Mammary epithelial cell (primary cell): ENCODE measurements at regions of chr6 and their contacts with region 1.

Region 1: GRCh38 chr6:146857180-146857979 is 258.6 kb downstream of the ADGB start:
- DNase-seq: peak; percentile 60
- H3K4me3 ChIP-seq: peak overlapping the region in 1 of 3 experiments; percentile 25
- H3K27ac ChIP-seq: no peak overlapping the region
- H3K4me1 ChIP-seq: peaks cover 8% of the 10 kb centered on the region
- H3K27me3 ChIP-seq: no peaks in the 10 kb centered on the region
- CTCF ChIP-seq: peak; percentile 91 to 96

Region 2: GRCh38 chr6:146803601-146804000 is 53.8 kb before region 1 on chr6:
- CTCF ChIA-PET with region 1: no interaction called
- dilution Hi-C with region 1: no loop called
- in situ Hi-C with region 1: no loop called
- intact Hi-C with region 1: no loop called
- DNase-seq: no peak
- H3K4me3 ChIP-seq: no peak overlapping the region
- H3K27ac ChIP-seq: no peak overlapping the region
- H3K4me1 ChIP-seq: no peaks in the 10 kb centered on the region
- H3K27me3 ChIP-seq: no peaks in the 10 kb centered on the region
- CTCF ChIP-seq: no peak

Region 3: GRCh38 chr6:146913842-146914488 is 56.6 kb after region 1 on chr6:
- CTCF ChIA-PET with region 1: no interaction called
- dilution Hi-C with region 1: no loop called
- in situ Hi-C with region 1: no loop called
- intact Hi-C with region 1: loop called (anchors 5 kb)
- DNase-seq: peak; percentile 92
- H3K4me3 ChIP-seq: peak overlapping the region; percentile 22 to 43 (median 33)
- H3K27ac ChIP-seq: peak overlapping the region; percentile 98
- H3K4me1 ChIP-seq: peaks cover 37% of the 10 kb centered on the region
- H3K27me3 ChIP-seq: no peaks in the 10 kb centered on the region
- CTCF ChIP-seq: no peak

Region 4: GRCh38 chr6:146985111-146985510 is 127.7 kb after region 1 on chr6:
- CTCF ChIA-PET with region 1: no interaction called
- dilution Hi-C with region 1: no loop called
- in situ Hi-C with region 1: no loop called
- intact Hi-C with region 1: loop called (anchors 5 kb)
- DNase-seq: no peak
- H3K4me3 ChIP-seq: no peak overlapping the region
- H3K27ac ChIP-seq: no peak overlapping the region
- H3K4me1 ChIP-seq: no peaks in the 10 kb centered on the region
- H3K27me3 ChIP-seq: no peaks in the 10 kb centered on the region
- CTCF ChIP-seq: no peak

Region 5: GRCh38 chr6:147222160-147222838 is 364.9 kb after region 1 on chr6:
- CTCF ChIA-PET with region 1: no interaction called
- dilution Hi-C with region 1: no loop called
- in situ Hi-C with region 1: no loop called
- intact Hi-C with region 1: loop called (anchors 2 kb)
- DNase-seq: no peak
- H3K4me3 ChIP-seq: no peak overlapping the region
- H3K27ac ChIP-seq: no peak overlapping the region
- H3K4me1 ChIP-seq: no peaks in the 10 kb centered on the region
- H3K27me3 ChIP-seq: no peaks in the 10 kb centered on the region
- CTCF ChIP-seq: peak; percentile 49 to 52

Region 6: DNA sequence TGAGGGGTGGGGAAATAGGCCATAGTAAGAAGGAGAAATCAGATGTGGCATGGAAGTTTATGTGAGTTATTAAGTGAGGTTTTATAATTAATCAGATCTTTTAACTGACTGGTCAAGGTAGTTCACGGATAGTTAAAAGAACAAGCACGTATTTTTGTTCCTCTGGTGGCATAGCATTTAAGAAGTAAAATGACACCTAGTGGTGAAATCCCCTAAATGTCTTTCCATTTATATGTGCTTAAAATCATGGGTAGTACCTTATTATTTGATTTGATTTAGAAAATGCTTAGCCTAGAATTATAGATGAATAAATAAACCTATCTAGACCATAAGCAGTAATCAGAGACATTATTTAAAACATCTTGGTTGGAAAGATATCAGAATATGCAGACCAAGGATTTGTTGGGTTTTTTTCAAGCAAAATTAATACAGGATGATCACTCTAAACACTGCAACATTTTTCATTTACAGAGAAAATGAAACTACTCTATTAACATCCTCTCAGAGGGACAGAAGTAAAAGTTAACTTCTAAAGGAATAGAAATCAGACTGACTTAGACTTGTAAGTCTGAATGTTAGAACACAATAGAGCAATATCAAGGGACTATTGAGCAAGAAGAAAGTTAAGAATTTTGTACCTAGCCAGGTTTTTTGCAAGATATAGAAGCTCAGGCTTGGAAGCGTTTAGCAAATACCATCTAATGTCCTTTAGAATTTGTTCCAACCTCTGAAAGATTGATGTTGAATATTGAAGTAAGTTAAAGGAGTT is 427.9 kb after region 1 on chr6:
- CTCF ChIA-PET with region 1: no interaction called
- dilution Hi-C with region 1: no loop called
- in situ Hi-C with region 1: no loop called
- intact Hi-C with region 1: loop called (anchors 1 kb)
- DNase-seq: peak; percentile 22
- H3K4me3 ChIP-seq: no peak overlapping the region
- H3K27ac ChIP-seq: no peak overlapping the region
- H3K4me1 ChIP-seq: peaks cover 13% of the 10 kb centered on the region
- H3K27me3 ChIP-seq: no peaks in the 10 kb centered on the region
- CTCF ChIP-seq: peak; percentile 35 to 50

Region 7: GRCh38 chr6:147382945-147383554 is 525.7 kb after region 1 on chr6:
- CTCF ChIA-PET with region 1: no interaction called
- dilution Hi-C with region 1: no loop called
- in situ Hi-C with region 1: no loop called
- intact Hi-C with region 1: loop called (anchors 10 kb)
- DNase-seq: peak; percentile 19
- H3K4me3 ChIP-seq: no peak overlapping the region
- H3K27ac ChIP-seq: no peak overlapping the region
- H3K4me1 ChIP-seq: no peaks in the 10 kb centered on the region
- H3K27me3 ChIP-seq: no peaks in the 10 kb centered on the region
- CTCF ChIP-seq: peak; percentile 51 to 53